Mammary epithelial cell (primary cell): ENCODE measurements at regions of chr12 and their contacts with region 1.

Region 1: GRCh38 chr12:63276537-63277365 is 125.8 kb upstream of the AVPR1A start:
- DNase-seq: peak; percentile 37
- H3K4me3 ChIP-seq: no peak overlapping the region
- H3K27ac ChIP-seq: no peak overlapping the region
- H3K4me1 ChIP-seq: no peaks in the 10 kb centered on the region
- H3K27me3 ChIP-seq: no peaks in the 10 kb centered on the region
- CTCF ChIP-seq: peak; percentile 89 to 91

Region 2: GRCh38 chr12:62983599-62984022 is 293.1 kb before region 1 on chr12:
- CTCF ChIA-PET with region 1: no interaction called
- dilution Hi-C with region 1: no loop called
- in situ Hi-C with region 1: no loop called
- intact Hi-C with region 1: no loop called
- DNase-seq: no peak
- H3K4me3 ChIP-seq: no peak overlapping the region
- H3K27ac ChIP-seq: no peak overlapping the region
- H3K4me1 ChIP-seq: no peaks in the 10 kb centered on the region
- H3K27me3 ChIP-seq: peaks cover 3% of the 10 kb centered on the region
- CTCF ChIP-seq: peak in 1 of 2 donors; percentile 29

Region 3: DNA sequence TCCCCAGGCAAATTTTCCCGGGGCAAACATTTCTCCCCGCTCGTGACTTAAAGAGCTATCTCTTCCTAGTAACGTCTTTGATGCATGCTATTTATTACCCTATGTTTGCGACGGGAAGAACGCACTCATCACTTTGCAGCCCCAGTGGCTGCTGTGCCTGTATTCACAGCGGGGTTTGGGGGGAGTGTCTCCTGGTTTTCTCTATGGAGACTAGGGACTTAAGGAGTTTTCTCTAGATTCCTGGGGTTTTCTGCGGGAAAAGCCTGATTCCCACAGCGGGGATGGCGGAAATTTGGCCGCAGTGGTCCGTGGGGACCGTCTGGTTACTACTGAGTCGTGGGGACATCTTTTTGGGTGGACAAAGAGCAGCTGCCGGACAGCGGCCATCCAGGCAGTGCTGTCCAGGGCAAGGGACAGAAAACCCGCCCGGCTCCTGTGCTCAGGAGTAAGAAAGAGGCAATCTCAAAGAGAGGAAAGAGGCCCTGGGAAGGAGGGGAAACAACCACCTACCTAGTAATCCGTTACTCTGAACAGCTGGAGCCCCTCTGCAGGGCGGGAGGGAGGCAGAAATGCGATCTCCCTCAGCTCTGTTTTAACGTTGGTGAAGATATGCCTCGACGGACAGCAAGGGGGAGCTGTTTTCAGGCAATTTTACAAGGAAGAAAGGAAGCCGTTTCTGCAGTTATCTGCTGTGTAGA is 125.0 kb before region 1 on chr12:
- CTCF ChIA-PET with region 1: interaction called, 5 read pairs
- dilution Hi-C with region 1: no loop called
- in situ Hi-C with region 1: no loop called
- intact Hi-C with region 1: loop called (anchors 1 kb)
- DNase-seq: peak; percentile 28
- H3K4me3 ChIP-seq: no peak overlapping the region
- H3K27ac ChIP-seq: no peak overlapping the region
- H3K4me1 ChIP-seq: peaks cover 10% of the 10 kb centered on the region
- H3K27me3 ChIP-seq: peaks cover 48% of the 10 kb centered on the region
- CTCF ChIP-seq: peak; percentile 78 to 89

Region 4: DNA sequence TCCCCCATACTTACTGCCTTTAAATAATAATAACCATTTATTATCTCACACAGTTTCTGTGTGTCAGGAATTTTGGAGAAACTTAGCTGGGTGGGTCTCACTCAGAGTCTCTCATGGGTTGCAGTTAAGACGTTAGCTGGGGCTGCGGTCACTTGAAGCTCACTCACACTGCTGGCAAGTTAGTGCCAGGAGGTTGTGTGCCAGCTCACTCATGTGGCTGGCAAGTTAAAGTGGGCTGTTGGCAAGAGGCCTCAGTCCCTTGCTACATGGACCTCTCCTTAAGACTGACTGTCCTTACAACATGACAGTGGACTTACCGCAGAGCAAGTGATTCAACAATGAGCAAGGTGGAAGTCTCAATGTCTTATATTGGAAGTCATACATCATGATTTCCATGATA is 64.4 kb before region 1 on chr12:
- CTCF ChIA-PET with region 1: no interaction called
- dilution Hi-C with region 1: no loop called
- in situ Hi-C with region 1: no loop called
- intact Hi-C with region 1: no loop called
- DNase-seq: no peak
- H3K4me3 ChIP-seq: no peak overlapping the region
- H3K27ac ChIP-seq: no peak overlapping the region
- H3K4me1 ChIP-seq: no peaks in the 10 kb centered on the region
- H3K27me3 ChIP-seq: peaks cover 10% of the 10 kb centered on the region
- CTCF ChIP-seq: no peak

Region 5: DNA sequence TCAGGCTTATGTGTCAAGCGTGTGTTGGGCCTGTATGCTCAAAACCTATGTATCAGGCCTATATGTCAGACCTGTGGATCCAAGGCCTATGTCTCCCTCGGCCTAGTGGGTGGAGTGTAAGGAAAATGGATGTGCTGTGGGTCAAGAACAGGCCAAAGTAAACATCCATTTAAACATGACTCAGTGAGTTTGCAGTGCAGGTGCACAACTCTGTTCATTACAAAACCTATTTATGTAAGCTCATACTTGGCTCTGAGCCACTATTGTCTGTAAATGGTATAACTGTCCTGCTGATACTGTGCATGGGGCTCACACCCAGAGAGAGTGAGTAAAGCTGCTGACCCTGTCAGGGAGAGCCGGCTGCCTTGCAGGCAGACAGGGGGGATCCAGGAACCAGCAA is 124.0 kb after region 1 on chr12:
- CTCF ChIA-PET with region 1: no interaction called
- dilution Hi-C with region 1: no loop called
- in situ Hi-C with region 1: no loop called
- intact Hi-C with region 1: no loop called
- DNase-seq: peak; percentile 93
- H3K4me3 ChIP-seq: no peak overlapping the region
- H3K27ac ChIP-seq: no peak overlapping the region
- H3K4me1 ChIP-seq: peaks cover 13% of the 10 kb centered on the region
- H3K27me3 ChIP-seq: peaks cover 8% of the 10 kb centered on the region
- CTCF ChIP-seq: no peak

Region 6: DNA sequence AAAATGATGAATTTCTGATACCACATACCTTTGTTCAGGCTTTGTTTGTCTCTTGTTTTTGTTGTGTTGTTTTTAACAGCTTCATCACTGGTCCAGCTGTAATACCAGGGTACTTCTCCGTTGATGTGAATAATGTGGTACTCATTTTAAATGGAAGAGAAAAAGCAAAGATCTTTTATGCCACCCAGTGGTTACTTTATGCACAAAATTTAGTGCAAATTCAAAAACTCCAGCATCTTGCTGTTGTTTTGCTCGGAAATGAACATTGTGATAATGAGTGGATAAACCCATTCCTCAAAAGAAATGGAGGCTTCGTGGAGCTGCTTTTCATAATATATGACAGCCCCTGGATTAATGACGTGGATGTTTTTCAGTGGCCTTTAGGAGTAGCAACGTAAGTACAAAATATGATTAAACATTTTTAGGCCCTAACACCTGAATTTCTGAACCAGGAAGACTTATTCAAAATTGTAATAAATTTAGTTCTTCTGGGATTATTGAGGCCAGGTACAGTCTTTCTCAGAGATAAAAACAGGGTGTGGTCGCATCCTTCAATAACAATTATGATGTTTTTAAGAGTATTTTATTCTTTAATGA is 525.4 kb after region 1 on chr12:
- CTCF ChIA-PET with region 1: no interaction called
- dilution Hi-C with region 1: no loop called
- in situ Hi-C with region 1: no loop called
- intact Hi-C with region 1: loop called (anchors 5 kb)
- DNase-seq: peak; percentile 13
- H3K4me3 ChIP-seq: no peak overlapping the region
- H3K27ac ChIP-seq: no peak overlapping the region
- H3K4me1 ChIP-seq: no peaks in the 10 kb centered on the region
- H3K27me3 ChIP-seq: no peaks in the 10 kb centered on the region
- CTCF ChIP-seq: peak; percentile 35 to 53